Activated naive CD4-positive, alpha-beta T cell treated with anti-CD3 and anti-CD28 coated beads for 36 hours (primary cell): ENCODE measurements at regions of chr22 and their contacts with region 1.

Region 1: DNA sequence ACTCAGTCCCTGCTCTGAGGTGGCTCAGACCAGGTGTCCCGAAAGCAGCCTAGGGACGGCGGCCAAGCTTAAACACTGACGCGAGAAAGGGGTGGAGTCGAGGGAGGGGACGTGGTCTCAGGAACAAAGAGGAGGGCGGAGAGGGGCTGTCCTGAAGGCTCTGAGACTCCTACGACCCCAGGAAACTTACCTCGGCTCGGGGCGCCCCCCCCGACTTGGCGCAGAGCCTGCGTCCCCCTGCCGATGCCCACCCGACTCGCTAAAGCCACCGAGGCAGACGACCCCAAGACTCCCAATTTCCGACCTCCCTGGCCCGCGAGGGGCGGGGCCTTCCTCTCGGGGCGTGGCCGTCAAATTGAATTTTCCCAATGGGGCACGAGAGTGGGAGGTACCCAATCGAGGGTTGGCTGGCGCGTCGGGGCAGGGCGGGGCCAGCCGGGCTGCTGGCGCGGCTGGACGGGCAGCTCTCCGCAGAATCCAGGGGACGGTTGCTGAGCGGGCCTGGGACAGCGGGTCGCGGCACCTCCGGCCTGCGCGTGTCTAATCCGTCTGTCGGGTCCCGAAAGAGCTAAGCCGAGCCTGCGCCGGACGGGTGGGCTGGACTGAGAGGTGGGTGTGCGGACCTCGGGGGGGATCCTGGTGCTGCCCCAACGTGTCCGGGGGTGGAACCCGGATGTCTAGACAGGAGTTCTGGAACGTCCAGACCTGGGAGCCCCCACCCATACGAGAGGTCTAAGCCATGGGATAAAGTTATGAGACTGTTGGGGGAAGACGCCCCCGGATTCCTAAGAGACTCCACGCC is at the start of gene SMTN:
- DNase-seq: peak; percentile 91
- H3K4me3 Mint-ChIP-seq: peak within 1 kb of the TSS; percentile 79
- H3K27ac Mint-ChIP-seq: peak within 1 kb of the TSS; percentile 18
- H3K4me1 Mint-ChIP-seq: peaks cover 32% of the 10 kb centered on the region
- H3K27me3 Mint-ChIP-seq: no peaks in the 10 kb centered on the region
- total RNA-seq, gene SMTN: 46.2 to 47.6 TPM

Region 2: DNA sequence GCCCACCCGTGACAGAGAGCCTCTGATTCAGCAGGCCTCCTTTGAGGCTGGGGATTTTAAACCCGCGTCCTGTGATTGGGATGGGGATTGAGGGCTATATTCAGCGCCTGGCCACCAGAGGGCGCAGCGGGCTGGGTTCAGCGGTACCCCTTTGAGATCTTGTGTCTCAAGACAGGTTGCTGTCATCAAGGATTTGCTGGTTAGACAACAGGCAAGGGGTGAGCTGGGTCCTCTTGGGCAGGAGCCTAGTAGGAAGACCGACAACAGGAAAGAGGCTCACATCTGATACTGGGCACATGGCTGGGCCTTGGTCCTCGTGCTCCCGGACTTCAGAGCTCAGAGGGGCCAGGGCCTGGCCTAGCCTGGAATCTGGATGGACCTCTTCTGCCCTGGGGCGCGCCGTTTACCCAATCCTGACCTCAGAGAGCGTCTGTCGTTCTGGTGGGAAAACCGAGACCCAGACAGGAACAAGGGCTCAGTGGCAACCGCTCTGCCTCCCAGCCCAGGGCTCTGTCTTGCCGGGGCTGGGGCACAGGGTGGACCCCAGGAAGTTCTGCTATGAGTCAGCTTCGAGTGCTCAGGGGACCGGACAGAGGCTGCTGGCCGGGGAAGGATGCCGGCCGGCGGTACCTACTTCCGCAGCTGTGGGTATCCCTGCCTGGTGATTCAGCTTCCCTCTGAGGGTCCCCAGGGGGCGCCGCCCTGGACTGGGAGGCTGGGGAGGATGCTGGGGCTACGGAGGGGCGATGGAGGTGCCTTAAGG is 446.4 kb before region 1 on chr22:
- CTCF ChIA-PET with region 1: no interaction called
- intact Hi-C with region 1: loop called (anchors 2 kb)
- DNase-seq: peak; percentile 96
- H3K4me3 Mint-ChIP-seq: peak overlapping the region; percentile 75
- H3K27ac Mint-ChIP-seq: peak overlapping the region; percentile 67
- H3K4me1 Mint-ChIP-seq: peaks cover 19% of the 10 kb centered on the region
- H3K27me3 Mint-ChIP-seq: no peaks in the 10 kb centered on the region

Region 3: GRCh38 chr22:30763815-30764686 is 317.0 kb before region 1 on chr22:
- CTCF ChIA-PET with region 1: interaction called, 4 read pairs
- intact Hi-C with region 1: loop called (anchors 1 kb)
- DNase-seq: peak; percentile 79
- H3K4me3 Mint-ChIP-seq: no peak overlapping the region
- H3K27ac Mint-ChIP-seq: no peak overlapping the region
- H3K4me1 Mint-ChIP-seq: peaks cover 2% of the 10 kb centered on the region
- H3K27me3 Mint-ChIP-seq: no peaks in the 10 kb centered on the region

Region 4: GRCh38 chr22:30940685-30941362 is 140.2 kb before region 1 on chr22:
- CTCF ChIA-PET with region 1: interaction called, 29 read pairs
- intact Hi-C with region 1: loop called (anchors 2 kb)
- DNase-seq: peak; percentile 73
- H3K4me3 Mint-ChIP-seq: peak overlapping the region; percentile 46
- H3K27ac Mint-ChIP-seq: peak overlapping the region; percentile 73
- H3K4me1 Mint-ChIP-seq: peaks cover 77% of the 10 kb centered on the region
- H3K27me3 Mint-ChIP-seq: no peaks in the 10 kb centered on the region

Region 5: DNA sequence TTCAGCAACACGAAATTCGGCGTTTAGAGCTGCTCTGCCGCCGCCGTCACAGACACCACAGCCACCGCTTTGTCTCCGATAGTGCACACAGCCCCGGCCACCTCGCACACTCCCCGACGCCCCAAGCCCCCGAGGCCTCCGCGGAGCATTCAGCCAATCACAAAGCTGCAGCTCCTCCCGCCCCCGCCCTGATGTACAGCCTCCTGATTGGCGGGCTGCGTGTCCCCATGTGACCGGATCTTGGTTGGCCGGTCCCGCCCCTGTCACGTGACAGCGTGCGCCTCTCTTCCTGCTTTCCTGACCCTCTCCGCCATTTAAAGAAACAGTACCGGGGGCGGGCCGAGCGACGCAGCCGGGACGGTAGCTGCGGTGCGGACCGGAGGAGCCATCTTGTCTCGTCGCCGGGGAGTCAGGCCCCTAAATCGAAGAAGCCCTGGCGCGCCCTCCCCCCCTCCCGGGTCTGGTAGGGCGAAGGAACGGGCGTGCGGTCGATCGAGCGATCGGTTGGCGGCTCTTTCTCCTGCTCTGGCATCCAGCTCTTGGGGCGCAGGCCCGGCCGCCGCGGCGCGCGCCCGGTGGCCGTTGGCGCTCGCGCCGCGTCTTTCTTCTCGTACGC is 112.0 kb before region 1 on chr22 and contains the start of gene TUG1:
- CTCF ChIA-PET with region 1: interaction called, 13 read pairs
- intact Hi-C with region 1: loop called (anchors 1 kb)
- DNase-seq: peak; percentile 98
- H3K4me3 Mint-ChIP-seq: peak within 1 kb of the TSS; percentile 93
- H3K27ac Mint-ChIP-seq: peak within 1 kb of the TSS; percentile 89
- H3K4me1 Mint-ChIP-seq: peaks cover 56% of the 10 kb centered on the region
- H3K27me3 Mint-ChIP-seq: no peaks in the 10 kb centered on the region
- total RNA-seq, gene TUG1: 42.3 to 44.0 TPM

Region 6: GRCh38 chr22:31121403-31121802 is 40.4 kb after region 1 on chr22:
- CTCF ChIA-PET with region 1: no interaction called
- intact Hi-C with region 1: no loop called
- DNase-seq: no peak
- H3K4me3 Mint-ChIP-seq: no peak overlapping the region
- H3K27ac Mint-ChIP-seq: no peak overlapping the region
- H3K4me1 Mint-ChIP-seq: no peaks in the 10 kb centered on the region
- H3K27me3 Mint-ChIP-seq: no peaks in the 10 kb centered on the region

Region 7: DNA sequence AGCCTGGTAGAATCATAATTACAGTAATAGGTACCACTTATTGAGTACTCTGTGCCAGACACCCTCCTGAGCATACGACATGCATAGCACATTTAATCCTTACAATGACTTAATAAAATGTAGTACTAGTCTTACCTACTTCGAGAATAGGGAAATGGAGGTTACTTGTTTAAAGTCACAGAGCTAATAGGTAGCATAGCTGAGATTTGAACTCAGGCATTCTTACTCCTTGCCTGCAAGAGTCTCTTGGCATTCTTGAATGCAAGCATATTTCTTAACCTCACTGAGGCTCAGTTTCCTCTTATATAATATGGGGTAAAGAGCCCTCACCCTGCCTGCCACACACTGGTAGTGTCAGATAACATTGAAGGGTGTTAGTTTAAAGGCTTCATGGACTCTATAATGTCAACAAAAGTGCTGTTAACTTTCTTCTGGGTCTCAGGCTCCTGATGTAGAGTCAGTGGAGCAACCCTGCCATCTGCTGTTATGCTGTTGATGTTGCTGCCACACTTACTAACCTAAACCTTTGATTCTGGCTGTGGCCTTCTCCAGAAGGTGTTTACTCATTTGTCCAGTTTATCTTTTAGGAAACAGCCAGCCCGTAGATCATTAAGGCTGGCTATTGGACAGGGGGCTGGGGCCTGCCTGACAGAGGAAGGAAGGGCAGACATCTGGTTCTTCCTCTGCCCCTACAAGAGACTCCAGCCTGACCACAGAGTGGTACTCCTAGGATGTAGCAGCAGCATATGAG is 150.0 kb after region 1 on chr22:
- CTCF ChIA-PET with region 1: no interaction called
- intact Hi-C with region 1: loop called (anchors 5 kb)
- DNase-seq: peak; percentile 60
- H3K4me3 Mint-ChIP-seq: no peak overlapping the region
- H3K27ac Mint-ChIP-seq: no peak overlapping the region
- H3K4me1 Mint-ChIP-seq: peaks cover 28% of the 10 kb centered on the region
- H3K27me3 Mint-ChIP-seq: no peaks in the 10 kb centered on the region